ENCODE measurements at regions of chr12 and their contacts with region 1.

Region 1: DNA sequence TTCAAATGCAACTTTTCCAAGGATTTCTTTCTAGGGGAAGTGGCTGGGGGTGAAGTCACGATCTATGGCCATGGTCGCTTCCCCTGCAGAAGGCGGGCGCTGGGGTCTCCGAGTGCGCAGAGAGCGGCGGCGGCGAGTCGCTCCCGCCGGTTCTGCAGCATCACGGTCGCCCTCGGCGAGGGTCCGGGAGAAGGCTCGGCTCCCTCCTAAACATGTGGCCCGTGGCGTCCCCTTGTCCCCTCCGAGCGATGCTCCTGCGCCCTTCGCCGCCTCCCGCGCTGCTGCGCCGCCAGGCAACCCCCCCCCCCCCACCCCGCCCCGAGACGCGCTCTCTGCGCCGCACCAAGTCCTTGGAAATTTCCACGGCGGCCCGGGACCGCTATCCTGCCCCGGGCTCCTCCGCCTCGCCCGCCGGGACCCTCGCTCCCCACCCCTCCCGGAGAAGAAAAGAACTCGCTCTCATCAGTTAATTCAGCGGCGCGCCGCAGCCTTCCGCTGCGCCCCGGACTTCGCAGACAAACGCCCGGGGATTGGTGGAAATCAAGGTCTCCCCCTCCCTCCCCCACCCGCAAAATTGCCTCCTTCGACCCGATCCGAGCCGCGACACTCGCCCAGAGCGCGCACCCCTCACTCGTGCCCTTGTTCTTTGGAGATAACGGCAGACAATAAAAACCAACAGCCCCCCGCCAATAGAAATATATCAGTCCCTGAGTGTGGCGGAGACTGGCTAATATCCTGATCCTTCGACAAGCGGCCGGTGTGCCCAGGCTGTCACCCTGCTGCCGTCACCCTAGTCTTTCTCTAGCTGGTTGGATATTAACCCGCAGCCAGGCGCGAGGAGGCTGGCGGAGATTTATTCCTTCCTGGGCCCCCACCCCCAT is at the start of gene ST8SIA1:
- DNase-seq: peak; percentile 66
- ATAC-seq: peak; percentile 70
- total RNA-seq, gene ST8SIA1: 2.6 TPM

Region 2: DNA sequence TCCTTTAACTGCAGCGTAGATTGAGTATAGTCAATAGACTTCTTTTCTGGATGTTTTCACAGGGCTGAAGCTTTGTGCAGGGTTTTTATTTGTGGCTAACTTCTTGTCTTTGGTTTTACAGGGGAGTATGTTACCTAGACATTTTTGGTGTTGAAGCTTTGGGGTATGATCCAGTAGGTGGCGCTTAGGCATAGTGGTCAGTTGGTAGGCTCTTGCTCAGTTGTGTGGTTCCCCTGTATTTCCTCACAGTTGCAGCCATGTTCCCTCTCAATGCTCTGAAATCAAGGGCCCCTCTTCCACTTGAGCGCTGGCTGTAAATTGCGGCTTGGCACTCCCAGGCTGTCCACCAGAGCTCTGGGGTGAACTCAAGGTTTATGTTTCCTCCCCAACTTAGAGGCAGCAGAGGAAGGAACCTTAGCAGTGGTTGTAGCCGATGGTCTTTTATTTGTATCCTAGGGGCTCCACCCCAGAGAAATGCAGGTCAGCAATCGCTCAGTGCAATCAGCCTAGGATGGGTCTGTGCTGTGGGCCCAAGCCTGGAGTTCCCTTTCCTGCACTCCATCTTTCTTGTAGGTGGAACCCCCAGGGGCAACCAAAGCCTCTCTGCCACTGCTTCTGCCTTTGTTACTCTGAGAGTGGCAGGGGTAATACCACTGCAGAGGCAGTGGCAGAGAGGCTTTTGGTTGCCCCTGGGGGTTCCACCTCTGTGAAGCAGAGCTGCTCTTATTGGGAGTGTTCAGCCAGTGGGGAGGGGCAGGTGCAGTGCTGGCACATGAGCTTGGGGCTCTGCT is 233.5 kb before region 1 on chr12:
- intact Hi-C with region 1: loop called (anchors 5 kb)
- DNase-seq: no peak
- ATAC-seq: peak; percentile 79

Measured in left ventricle myocardium superior (tissue), 1 donor.